ENCODE measurements at regions of chr1 and their contacts with region 1.

Region 1: GRCh38 chr1:192609110-192610079 is 26.6 kb upstream of the RGS13 start:
- DNase-seq: peak; percentile 75 to 83
- ATAC-seq: peak; percentile 87 to 94 (median 93)
- H3K4me3 ChIP-seq: no peak overlapping the region
- H3K4me3 Mint-ChIP-seq: peak overlapping the region; percentile 78
- H3K27ac ChIP-seq: peak overlapping the region; percentile 70
- H3K27ac Mint-ChIP-seq: peak overlapping the region; percentile 80 to 96
- H3K4me1 ChIP-seq: peaks cover 14% of the 10 kb centered on the region
- H3K4me1 Mint-ChIP-seq: peaks cover 27 to 43% of the 10 kb centered on the region in 2 donors
- H3K27me3 ChIP-seq: no peaks in the 10 kb centered on the region
- H3K27me3 Mint-ChIP-seq: peaks cover 0 to 3% of the 10 kb centered on the region in 2 donors
- CTCF ChIP-seq: no peak

Region 2: GRCh38 chr1:192477630-192478029 is 131.8 kb before region 1 on chr1:
- intact Hi-C with region 1: loop called (anchors 1 kb)
- DNase-seq: peak in 1 of 2 donors; percentile 69
- ATAC-seq: peak in 2 of 3 donors; percentile 70 to 74
- H3K4me3 ChIP-seq: no peak overlapping the region
- H3K4me3 Mint-ChIP-seq: no peak overlapping the region
- H3K27ac ChIP-seq: no peak overlapping the region
- H3K27ac Mint-ChIP-seq: no peak overlapping the region
- H3K4me1 ChIP-seq: no peaks in the 10 kb centered on the region
- H3K4me1 Mint-ChIP-seq: no peaks in the 10 kb centered on the region
- H3K27me3 ChIP-seq: peaks cover 3% of the 10 kb centered on the region
- H3K27me3 Mint-ChIP-seq: no peaks in the 10 kb centered on the region
- CTCF ChIP-seq: peak; percentile 61

Region 3: DNA sequence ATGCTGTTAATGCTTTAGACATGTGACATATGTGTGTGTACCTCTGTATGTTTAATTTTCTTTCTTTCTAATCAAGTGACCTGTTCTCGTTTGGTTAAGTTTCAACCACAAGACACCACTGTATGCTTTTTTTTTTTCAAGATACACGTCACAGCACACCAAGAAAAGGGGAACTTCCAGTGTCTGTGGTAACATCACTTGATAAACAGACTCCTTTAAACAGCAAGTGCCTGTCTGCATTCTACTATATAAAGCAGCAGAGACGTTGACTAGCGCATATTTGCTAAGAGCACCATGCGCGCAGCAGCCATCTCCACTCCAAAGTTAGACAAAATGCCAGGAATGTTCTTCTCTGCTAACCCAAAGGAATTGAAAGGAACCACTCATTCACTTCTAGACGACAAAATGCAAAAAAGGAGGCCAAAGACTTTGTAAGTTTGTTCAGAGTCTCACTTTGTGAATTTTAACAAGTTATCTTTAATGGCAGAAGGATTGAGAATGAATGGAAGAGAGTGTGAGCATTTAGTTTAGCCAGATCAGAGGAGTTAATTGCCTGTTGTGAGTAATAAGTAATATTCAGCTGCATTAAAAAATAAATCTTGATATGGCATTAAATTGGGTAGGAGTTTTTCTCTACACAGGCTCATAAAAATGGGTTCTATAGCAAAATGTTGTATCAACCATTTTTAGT is 33.8 kb before region 1 on chr1 and contains the start of gene RGS1:
- intact Hi-C with region 1: loop called (anchors 1 kb)
- DNase-seq: peak; percentile 62 to 90
- ATAC-seq: peak; percentile 88 to 91 (median 88)
- H3K4me3 ChIP-seq: peak within 1 kb of the TSS; percentile 21
- H3K4me3 Mint-ChIP-seq: peak within 1 kb of the TSS; percentile 89
- H3K27ac ChIP-seq: peak within 1 kb of the TSS; percentile 81
- H3K27ac Mint-ChIP-seq: peak within 1 kb of the TSS; percentile 91 to 92
- H3K4me1 ChIP-seq: peaks cover 3% of the 10 kb centered on the region
- H3K4me1 Mint-ChIP-seq: peaks cover 25 to 56% of the 10 kb centered on the region in 2 donors
- H3K27me3 ChIP-seq: no peaks in the 10 kb centered on the region
- H3K27me3 Mint-ChIP-seq: no peaks in the 10 kb centered on the region
- CTCF ChIP-seq: no peak
- total RNA-seq, gene RGS1: 306 to 365 (median 343) TPM

Region 4: DNA sequence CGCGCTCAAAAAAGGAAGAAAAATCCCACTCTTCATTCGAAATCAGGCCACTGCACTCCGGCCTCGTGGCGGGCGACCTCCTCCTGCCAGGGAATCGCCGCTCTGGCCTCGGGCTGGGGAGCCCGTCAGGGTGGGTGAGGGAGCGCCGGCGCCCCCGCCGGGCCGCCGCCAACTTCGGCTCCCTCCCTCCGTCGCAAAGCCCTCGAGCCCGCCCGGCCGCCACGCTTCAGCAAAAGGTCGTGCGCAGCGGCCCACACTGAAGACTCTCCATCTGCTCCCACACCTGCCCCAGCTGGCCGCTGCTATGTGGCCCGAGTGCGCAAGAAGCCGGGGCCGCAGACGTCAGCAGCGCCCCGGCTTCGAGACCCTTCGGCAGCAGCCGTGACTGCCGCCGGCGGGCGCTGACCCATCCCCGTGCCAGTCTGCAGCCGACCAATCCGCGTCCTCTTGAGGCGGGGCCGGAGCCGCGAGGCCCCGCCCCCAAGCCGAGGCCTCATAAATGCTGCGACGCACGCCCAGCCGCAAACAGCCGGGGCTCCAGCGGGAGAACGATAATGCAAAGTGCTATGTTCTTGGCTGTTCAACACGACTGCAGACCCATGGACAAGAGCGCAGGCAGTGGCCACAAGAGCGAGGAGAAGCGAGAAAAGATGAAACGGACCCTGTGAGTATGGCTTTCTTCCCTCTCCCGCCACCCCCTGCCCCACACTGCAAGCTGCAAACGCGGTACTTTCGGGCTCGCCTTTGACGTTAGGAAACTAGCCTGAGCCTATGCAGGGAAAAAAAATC is 199.3 kb after region 1 on chr1 and contains the start of gene RGS2:
- intact Hi-C with region 1: loop called (anchors 5 kb)
- DNase-seq: peak; percentile 85 to 95
- ATAC-seq: peak; percentile 87 to 95 (median 91)
- H3K4me3 ChIP-seq: peak within 1 kb of the TSS; percentile 96
- H3K4me3 Mint-ChIP-seq: peak within 1 kb of the TSS; percentile 100
- H3K27ac ChIP-seq: peak within 1 kb of the TSS; percentile 91
- H3K27ac Mint-ChIP-seq: peak within 1 kb of the TSS; percentile 95 to 99
- H3K4me1 ChIP-seq: peaks cover 16% of the 10 kb centered on the region
- H3K4me1 Mint-ChIP-seq: peaks cover 36 to 39% of the 10 kb centered on the region in 2 donors
- H3K27me3 ChIP-seq: no peaks in the 10 kb centered on the region
- H3K27me3 Mint-ChIP-seq: no peaks in the 10 kb centered on the region
- CTCF ChIP-seq: no peak
- total RNA-seq, gene RGS2: 117 to 268 (median 154) TPM

Region 5: GRCh38 chr1:193121616-193122593 is 512.5 kb after region 1 on chr1 and contains the start of gene CDC73:
- intact Hi-C with region 1: loop called (anchors 10 kb)
- DNase-seq: peak; percentile 98 to 99
- ATAC-seq: peak; percentile 91 to 98 (median 94)
- H3K4me3 ChIP-seq: peak within 1 kb of the TSS; percentile 93
- H3K4me3 Mint-ChIP-seq: peak within 1 kb of the TSS; percentile 93
- H3K27ac ChIP-seq: peak within 1 kb of the TSS; percentile 97
- H3K27ac Mint-ChIP-seq: peak within 1 kb of the TSS; percentile 88 to 95
- H3K4me1 ChIP-seq: peaks cover 13% of the 10 kb centered on the region
- H3K4me1 Mint-ChIP-seq: peaks cover 46 to 51% of the 10 kb centered on the region in 2 donors
- H3K27me3 ChIP-seq: no peaks in the 10 kb centered on the region
- H3K27me3 Mint-ChIP-seq: no peaks in the 10 kb centered on the region
- CTCF ChIP-seq: peak; percentile 96
- total RNA-seq, gene CDC73: 73.2 to 86.0 (median 82.6) TPM